MCF 10A (cell line): ENCODE measurements at regions of chr10 and their contacts with region 1.

Region 1: GRCh38 chr10:104328896-104329710 is 9.2 kb downstream of the ITPRIP start:
- DNase-seq: peak; percentile 97
- H3K4me3 Mint-ChIP-seq: peak overlapping the region; percentile 64
- H3K27ac Mint-ChIP-seq: peak overlapping the region; percentile 95
- H3K4me1 Mint-ChIP-seq: peaks cover 73% of the 10 kb centered on the region
- H3K27me3 Mint-ChIP-seq: no peaks in the 10 kb centered on the region
- CTCF ChIP-seq: no peak

Region 2: DNA sequence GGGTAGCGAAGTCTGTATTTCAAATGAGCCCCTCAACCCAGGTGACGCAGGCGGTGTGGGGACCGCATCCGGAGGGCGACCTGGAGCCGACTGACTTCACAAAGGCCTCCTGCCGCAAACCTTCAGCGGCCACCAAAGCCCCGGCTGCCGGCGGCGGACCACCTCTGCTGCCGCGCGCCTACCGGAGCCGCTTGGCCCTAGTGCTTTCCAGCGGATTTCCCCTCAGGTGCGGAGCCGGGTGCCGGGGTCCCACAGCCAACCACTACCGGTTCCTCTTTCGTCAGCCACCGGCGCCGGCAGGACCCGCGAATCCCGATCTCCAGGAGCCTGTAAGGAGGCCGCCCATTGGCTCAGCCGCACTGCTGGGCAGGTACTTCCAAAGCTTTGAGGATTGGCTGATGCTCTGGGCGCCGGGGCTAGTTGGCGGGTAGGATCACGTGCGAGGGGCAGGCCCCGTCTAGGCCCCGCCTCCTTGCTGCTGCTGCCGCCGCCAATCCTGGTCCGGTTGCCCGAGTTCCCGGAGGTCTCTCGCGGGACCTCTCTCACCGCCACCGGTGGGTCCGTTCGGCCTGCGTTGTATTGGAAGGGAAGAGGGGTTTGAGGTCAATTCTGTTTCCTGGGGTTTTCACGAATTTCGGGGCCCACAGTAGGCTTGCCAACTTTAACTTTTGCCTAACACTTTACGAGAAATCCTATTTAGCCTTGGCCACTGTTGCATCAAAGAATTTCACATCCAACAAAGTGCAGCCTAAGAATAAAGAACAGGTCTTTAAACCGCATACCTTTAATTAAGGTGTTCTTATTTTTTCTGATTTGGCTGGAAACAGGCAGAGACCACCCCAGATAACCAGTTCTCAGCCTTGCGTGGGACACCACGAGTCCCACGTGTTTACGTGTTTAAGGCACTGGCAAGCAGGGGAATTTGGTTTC is 60.1 kb before region 1 on chr10 and contains the start of gene GSTO2:
- CTCF ChIA-PET with region 1: interaction called, 46 read pairs
- POLR2A ChIA-PET with region 1: interaction called, 18 read pairs
- intact Hi-C with region 1: no loop called
- DNase-seq: peak; percentile 97
- H3K4me3 Mint-ChIP-seq: peak within 1 kb of the TSS; percentile 85
- H3K27ac Mint-ChIP-seq: peak within 1 kb of the TSS; percentile 92
- H3K4me1 Mint-ChIP-seq: peaks cover 8% of the 10 kb centered on the region
- H3K27me3 Mint-ChIP-seq: no peaks in the 10 kb centered on the region
- CTCF ChIP-seq: no peak
- total RNA-seq, gene GSTO2: 33.8 and 40.9 TPM in 2 replicates

Region 3: GRCh38 chr10:104300736-104301292 is 28.3 kb before region 1 on chr10:
- CTCF ChIA-PET with region 1: interaction called, 16 read pairs
- POLR2A ChIA-PET with region 1: interaction called, 22 read pairs
- intact Hi-C with region 1: loop called (anchors 2 kb)
- DNase-seq: peak; percentile 90
- H3K4me3 Mint-ChIP-seq: no peak overlapping the region
- H3K27ac Mint-ChIP-seq: peak overlapping the region; percentile 93
- H3K4me1 Mint-ChIP-seq: peaks cover 34% of the 10 kb centered on the region
- H3K27me3 Mint-ChIP-seq: no peaks in the 10 kb centered on the region
- CTCF ChIP-seq: no peak

Region 4: DNA sequence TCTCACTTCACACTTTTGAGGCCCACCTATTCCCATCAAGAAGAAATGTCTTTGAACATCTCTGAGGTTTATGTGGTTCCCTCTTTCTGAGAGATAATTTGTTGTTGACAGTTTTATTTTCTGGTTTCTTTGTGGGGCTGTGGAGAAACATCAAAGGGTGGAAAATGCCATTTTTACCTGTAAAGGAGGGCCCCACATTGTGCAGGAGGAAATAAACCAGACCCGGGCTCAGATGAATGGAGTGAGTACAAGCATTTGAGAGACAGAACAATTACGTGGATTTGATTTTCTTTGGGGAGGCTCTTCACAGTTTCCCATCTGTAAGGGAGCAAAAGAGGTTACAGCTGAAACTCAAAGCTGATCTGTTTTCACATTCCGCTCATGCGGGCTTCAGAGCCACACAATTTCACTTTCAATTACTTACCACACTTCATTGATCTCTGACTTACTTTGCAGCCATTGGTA is 20.6 kb before region 1 on chr10:
- CTCF ChIA-PET with region 1: interaction called, 16 read pairs
- POLR2A ChIA-PET with region 1: interaction called, 46 read pairs
- intact Hi-C with region 1: no loop called
- DNase-seq: no peak
- H3K4me3 Mint-ChIP-seq: no peak overlapping the region
- H3K27ac Mint-ChIP-seq: peak overlapping the region; percentile 37
- H3K4me1 Mint-ChIP-seq: peaks cover 30% of the 10 kb centered on the region
- H3K27me3 Mint-ChIP-seq: no peaks in the 10 kb centered on the region
- CTCF ChIP-seq: no peak

Region 5: DNA sequence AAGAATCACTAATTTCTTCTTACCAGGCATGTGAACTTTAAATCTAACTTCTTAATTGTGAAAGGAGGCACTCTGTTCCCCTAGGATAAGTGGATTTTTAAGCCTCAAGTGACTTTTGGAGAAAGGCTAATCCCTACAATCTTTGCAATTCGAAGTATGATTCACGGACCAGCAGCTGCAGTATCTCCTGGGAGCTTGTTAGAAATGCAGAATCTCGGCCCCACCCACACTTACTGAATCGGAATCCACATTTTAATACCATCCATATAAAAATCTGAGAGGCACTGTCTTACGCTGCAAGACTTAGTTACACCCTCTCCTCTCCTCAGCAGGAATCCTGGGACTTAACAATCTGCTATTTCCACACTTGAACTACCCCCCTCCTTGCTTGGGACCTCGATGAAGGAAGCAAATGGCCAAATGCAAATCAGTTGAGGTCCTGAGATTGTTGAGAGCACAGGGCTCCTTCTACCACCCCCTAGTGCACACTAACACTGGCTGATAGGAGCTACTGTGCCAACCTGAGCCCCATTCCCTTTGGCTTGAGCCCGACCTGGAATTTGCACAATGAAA is 11.8 kb before region 1 on chr10:
- CTCF ChIA-PET with region 1: interaction called, 13 read pairs
- POLR2A ChIA-PET with region 1: interaction called, 146 read pairs
- intact Hi-C with region 1: no loop called
- DNase-seq: no peak
- H3K4me3 Mint-ChIP-seq: peak overlapping the region; percentile 19
- H3K27ac Mint-ChIP-seq: peak overlapping the region; percentile 93
- H3K4me1 Mint-ChIP-seq: peaks cover 47% of the 10 kb centered on the region
- H3K27me3 Mint-ChIP-seq: no peaks in the 10 kb centered on the region
- CTCF ChIP-seq: no peak

Region 6: DNA sequence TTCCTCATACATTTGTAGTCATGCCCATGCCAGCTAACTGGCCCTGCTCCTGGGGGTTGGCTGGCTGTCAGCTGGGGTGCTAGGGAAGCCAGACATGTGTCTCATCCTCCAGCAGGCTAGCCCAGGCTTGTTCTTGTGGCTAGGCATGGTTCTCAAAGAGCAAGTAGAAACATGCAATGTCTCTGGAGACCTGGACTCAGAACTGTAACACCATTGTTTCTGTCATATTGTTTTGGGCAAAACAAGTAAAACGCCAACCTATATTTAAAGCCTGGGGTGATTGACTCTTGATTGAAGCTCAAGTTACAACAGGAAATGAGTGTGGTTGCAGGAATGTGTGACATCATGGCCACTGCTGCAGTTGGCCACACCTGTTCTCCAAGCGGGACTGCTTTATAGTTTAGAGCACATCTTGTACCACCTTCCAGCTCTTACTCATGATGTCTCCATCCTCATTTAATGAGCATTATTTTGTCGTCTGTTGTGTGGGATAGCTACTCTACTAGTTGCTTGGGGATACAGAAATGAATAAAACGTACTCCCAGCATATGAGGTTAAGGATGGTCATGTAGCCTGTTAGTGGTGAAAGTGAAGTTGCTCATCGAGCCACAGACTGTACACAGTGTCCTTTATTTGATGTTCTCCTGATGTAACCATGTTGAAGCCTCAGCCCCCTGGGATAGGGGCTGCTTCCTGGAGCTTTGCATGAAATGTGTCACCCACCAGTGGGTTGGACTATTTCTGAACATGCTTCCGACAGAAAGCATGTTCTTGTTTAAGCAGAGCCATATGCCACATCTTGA is 480.4 kb after region 1 on chr10:
- CTCF ChIA-PET with region 1: no interaction called
- POLR2A ChIA-PET with region 1: no interaction called
- intact Hi-C with region 1: loop called (anchors 1 kb)
- DNase-seq: peak; percentile 99
- H3K4me3 Mint-ChIP-seq: no peak overlapping the region
- H3K27ac Mint-ChIP-seq: peak overlapping the region; percentile 91
- H3K4me1 Mint-ChIP-seq: peaks cover 34% of the 10 kb centered on the region
- H3K27me3 Mint-ChIP-seq: no peaks in the 10 kb centered on the region
- CTCF ChIP-seq: no peak